ENCODE measurements at regions of chr18 and their contacts with region 1.

Region 1: GRCh38 chr18:58455314-58456188 is 173.3 kb downstream of the ALPK2 start:
- DNase-seq: peak; percentile 68
- H3K4me3 ChIP-seq: no peak overlapping the region
- H3K27ac ChIP-seq: no peak overlapping the region
- H3K4me1 ChIP-seq: peaks cover 13% of the 10 kb centered on the region
- H3K27me3 ChIP-seq: no peaks in the 10 kb centered on the region
- CTCF ChIP-seq: no peak

Region 2: GRCh38 chr18:58419587-58420199 is 35.9 kb before region 1 on chr18:
- CTCF ChIA-PET with region 1: no interaction called
- dilution Hi-C with region 1: loop called (anchors 5 kb)
- in situ Hi-C with region 1: no loop called
- intact Hi-C with region 1: no loop called
- DNase-seq: no peak
- H3K4me3 ChIP-seq: no peak overlapping the region
- H3K27ac ChIP-seq: no peak overlapping the region
- H3K4me1 ChIP-seq: peaks cover 17% of the 10 kb centered on the region
- H3K27me3 ChIP-seq: no peaks in the 10 kb centered on the region
- CTCF ChIP-seq: no peak

Region 3: GRCh38 chr18:58470292-58470691 is 14.7 kb after region 1 on chr18:
- CTCF ChIA-PET with region 1: no interaction called
- dilution Hi-C with region 1: no loop called
- in situ Hi-C with region 1: no loop called
- intact Hi-C with region 1: no loop called
- DNase-seq: no peak
- H3K4me3 ChIP-seq: no peak overlapping the region
- H3K27ac ChIP-seq: no peak overlapping the region
- H3K4me1 ChIP-seq: peaks cover 18% of the 10 kb centered on the region
- H3K27me3 ChIP-seq: no peaks in the 10 kb centered on the region
- CTCF ChIP-seq: no peak